Colonic mucosa (tissue), 4 donors: ENCODE measurements at regions of chr5 and their contacts with region 1.

Region 1: GRCh38 chr5:173778784-173779304 is 109.3 kb upstream of the CPEB4 start:
- DNase-seq: peak; percentile 48
- H3K4me3 ChIP-seq: no peak overlapping the region
- H3K27ac ChIP-seq: peak overlapping the region; percentile 49
- H3K4me1 ChIP-seq: no peaks in the 10 kb centered on the region
- H3K27me3 ChIP-seq: no peaks in the 10 kb centered on the region
- CTCF ChIP-seq: no peak

Region 2: GRCh38 chr5:173829817-173830216 is 51.0 kb after region 1 on chr5:
- intact Hi-C with region 1: loop called (anchors 10 kb)
- DNase-seq: no peak
- H3K4me3 ChIP-seq: no peak overlapping the region
- H3K27ac ChIP-seq: no peak overlapping the region
- H3K4me1 ChIP-seq: peaks cover under 1% of the 10 kb centered on the region
- H3K27me3 ChIP-seq: no peaks in the 10 kb centered on the region
- CTCF ChIP-seq: no peak